H1 (cell line): ENCODE measurements at regions of chr9 and their contacts with region 1.

Region 1: GRCh38 chr9:38017149-38017884 is 51.7 kb downstream of the SHB start:
- DNase-seq: peak; percentile 80 to 97
- H3K4me3 ChIP-seq: peak overlapping the region in 2 of 4 experiments; percentile 17 to 37; a peak in 2 of 8 replicates
- H3K27ac ChIP-seq: peak overlapping the region; percentile 83
- H3K4me1 ChIP-seq: peaks cover 31 to 60% (median 39%) of the 10 kb centered on the region in 4 experiments
- H3K27me3 ChIP-seq: no peaks in the 10 kb centered on the region
- CTCF ChIP-seq: peak; percentile 75 to 82 (median 80)
- EP300 ChIP-seq: peak; percentile 26 to 97
- POLR2A ChIP-seq: no peak; a peak in 1 of 3 replicates
- RAD21 ChIP-seq: peak; percentile 80 to 90

Region 2: DNA sequence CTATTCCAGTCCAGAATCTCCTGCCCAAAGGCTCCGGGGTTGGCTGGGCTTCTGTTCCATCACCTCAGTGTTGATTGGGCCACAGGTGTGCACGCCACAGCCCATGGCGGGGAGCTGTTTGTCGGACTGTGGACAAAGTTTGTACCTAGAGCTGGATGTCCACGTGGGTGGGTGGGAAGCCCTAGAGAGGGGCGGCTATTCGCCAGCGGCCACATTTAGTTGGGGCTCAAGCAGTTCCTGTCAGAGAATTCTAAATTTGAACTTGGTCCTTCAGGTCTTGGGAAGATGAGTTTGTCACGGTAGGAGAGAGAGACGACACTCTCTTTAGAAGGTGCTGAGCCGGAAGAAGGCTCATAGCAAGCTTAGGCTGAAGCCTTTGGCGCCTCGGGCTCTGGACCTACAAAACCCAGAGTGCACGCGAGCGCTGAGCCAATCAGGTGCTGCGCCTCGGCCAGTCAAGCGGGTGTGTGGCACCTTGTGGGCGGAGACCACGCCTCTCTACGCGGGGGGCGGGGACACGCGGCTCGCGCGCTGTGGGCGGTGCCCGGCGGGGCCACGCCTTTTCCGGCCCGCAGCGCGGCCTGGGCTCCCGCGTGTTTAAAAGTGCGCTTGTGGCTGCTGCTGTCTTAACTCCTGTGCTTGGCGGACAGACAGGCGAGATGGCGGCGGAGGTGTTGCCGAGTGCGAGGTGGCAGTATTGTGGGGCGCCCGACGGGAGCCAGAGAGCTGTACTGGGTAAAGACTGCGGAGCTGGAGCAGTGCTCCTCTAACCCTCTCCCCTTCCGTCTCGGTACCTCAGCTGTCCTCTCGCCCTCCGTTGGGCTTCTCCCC is 531.7 kb before region 1 on chr9 and contains the start of gene POLR1E:
- CTCF ChIA-PET with region 1: no interaction called
- POLR2A ChIA-PET with region 1: no interaction called
- DNase-seq: peak; percentile 91 to 98
- H3K4me3 ChIP-seq: peak within 1 kb of the TSS; percentile 78 to 90 (median 79)
- H3K27ac ChIP-seq: no peak within 1 kb of the TSS; the same call in 1 of the 2 replicates
- H3K4me1 ChIP-seq: peaks cover 0 to 14% (median 6%) of the 10 kb centered on the region in 4 experiments; a peak in 5 of 7 replicates
- H3K27me3 ChIP-seq: no peaks in the 10 kb centered on the region
- CTCF ChIP-seq: no peak
- EP300 ChIP-seq: no peak
- POLR2A ChIP-seq: peak; percentile 59 to 89
- RAD21 ChIP-seq: no peak
- total RNA-seq, gene POLR1E: 36.9 and 40.0 TPM in 2 replicates

Region 3: GRCh38 chr9:37753489-37754190 is 263.7 kb before region 1 on chr9 and contains the start of gene TRMT10B:
- CTCF ChIA-PET with region 1: no interaction called
- POLR2A ChIA-PET with region 1: no interaction called
- DNase-seq: peak in 1 of 2 experiments; percentile 82
- H3K4me3 ChIP-seq: peak within 1 kb of the TSS; percentile 72 to 89 (median 86)
- H3K27ac ChIP-seq: no peak within 1 kb of the TSS
- H3K4me1 ChIP-seq: peaks cover 0 to 5% (median 1%) of the 10 kb centered on the region in 4 experiments; a peak in 4 of 7 replicates
- H3K27me3 ChIP-seq: no peaks in the 10 kb centered on the region
- CTCF ChIP-seq: no peak
- EP300 ChIP-seq: no peak
- POLR2A ChIP-seq: no peak
- RAD21 ChIP-seq: no peak
- total RNA-seq, gene TRMT10B: 4.5 and 6.2 TPM in 2 replicates

Region 4: DNA sequence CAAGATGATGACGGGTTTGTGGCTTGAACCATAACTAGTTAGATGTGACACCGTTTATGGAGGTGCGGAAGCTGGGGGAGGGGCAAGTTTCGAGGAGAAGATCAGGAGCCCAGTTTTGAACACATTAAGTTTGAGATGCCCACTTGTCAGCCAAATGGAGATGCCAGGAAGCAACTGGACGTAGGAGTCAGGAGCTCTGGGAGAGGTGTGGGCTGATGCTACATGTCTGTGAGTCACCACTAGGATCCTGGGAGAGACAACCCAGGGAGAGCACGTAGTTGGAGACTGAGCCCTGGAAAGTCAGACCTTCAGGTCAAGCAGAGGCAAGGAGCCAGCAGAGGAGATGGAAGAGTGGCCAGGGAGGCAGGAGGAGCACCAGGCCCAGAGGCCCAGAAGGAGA is 64.6 kb before region 1 on chr9:
- CTCF ChIA-PET with region 1: interaction called, 10 read pairs
- POLR2A ChIA-PET with region 1: no interaction called
- DNase-seq: no peak
- H3K4me3 ChIP-seq: no peak overlapping the region
- H3K27ac ChIP-seq: no peak overlapping the region
- H3K4me1 ChIP-seq: no peaks in the 10 kb centered on the region
- H3K27me3 ChIP-seq: no peaks in the 10 kb centered on the region
- CTCF ChIP-seq: no peak
- EP300 ChIP-seq: no peak
- POLR2A ChIP-seq: no peak
- RAD21 ChIP-seq: no peak

Region 5: DNA sequence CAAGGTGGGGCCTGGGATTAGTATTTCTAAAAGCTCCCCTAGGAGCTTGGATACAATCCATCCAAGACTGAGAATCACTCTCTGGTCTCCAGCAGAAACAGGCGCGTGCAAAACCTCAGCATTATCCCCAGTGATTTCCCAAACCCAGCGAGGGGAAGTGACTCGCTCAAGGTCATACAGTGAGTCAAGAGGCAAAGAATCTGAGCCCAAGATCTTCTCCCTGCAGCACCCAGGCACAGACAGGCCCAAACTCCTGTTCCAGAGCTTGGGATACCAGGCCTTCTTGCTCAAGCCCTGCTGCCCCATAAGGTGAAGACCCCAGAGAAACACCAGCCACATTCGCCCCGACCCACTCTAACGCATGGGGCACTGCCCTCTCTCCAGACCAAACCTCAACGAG is 18.6 kb after region 1 on chr9:
- CTCF ChIA-PET with region 1: interaction called, 16 read pairs
- POLR2A ChIA-PET with region 1: interaction called, 10 read pairs
- DNase-seq: no peak
- H3K4me3 ChIP-seq: no peak overlapping the region
- H3K27ac ChIP-seq: no peak overlapping the region
- H3K4me1 ChIP-seq: peaks cover 5 to 15% (median 12%) of the 10 kb centered on the region in 4 experiments
- H3K27me3 ChIP-seq: no peaks in the 10 kb centered on the region
- CTCF ChIP-seq: no peak
- EP300 ChIP-seq: no peak
- POLR2A ChIP-seq: no peak
- RAD21 ChIP-seq: no peak

Region 6: DNA sequence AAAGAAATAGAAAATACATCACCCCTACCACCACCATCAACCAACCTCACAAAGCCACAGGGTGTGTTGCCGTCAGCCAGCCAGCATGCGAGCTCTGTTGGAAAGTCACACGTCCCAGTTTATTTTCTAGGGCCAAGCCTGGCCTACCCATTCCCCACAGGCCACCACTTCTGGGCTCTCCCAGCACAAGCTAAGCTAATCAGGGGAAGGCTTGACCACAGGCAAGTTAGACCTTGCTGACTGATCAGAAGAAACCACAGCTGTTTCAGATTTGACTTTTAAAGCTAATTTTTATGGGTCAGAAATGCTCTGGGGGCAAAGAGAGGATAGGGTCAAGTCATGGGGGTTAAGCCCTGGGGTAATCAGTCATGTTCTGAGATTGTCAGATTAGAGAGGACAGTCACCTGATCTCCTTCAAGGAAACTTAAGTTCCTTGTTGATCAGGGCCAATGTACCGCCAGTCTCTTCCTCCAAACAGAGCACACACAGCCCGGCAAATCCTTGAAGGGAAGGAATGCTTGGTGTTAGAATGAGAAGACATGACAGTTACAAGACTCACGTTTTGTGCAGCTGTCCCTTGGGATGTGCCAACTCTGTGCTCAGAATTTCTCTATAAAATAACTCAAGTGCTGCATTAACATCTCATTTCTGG is 44.1 kb after region 1 on chr9:
- CTCF ChIA-PET with region 1: interaction called, 22 read pairs
- POLR2A ChIA-PET with region 1: interaction called, 6 read pairs
- DNase-seq: no peak
- H3K4me3 ChIP-seq: no peak overlapping the region
- H3K27ac ChIP-seq: no peak overlapping the region
- H3K4me1 ChIP-seq: peaks cover 15 to 31% (median 23%) of the 10 kb centered on the region in 4 experiments
- H3K27me3 ChIP-seq: peaks cover 0 to 1% (median 0%) of the 10 kb centered on the region in 4 experiments; a peak in 2 of 7 replicates
- CTCF ChIP-seq: no peak
- EP300 ChIP-seq: no peak
- POLR2A ChIP-seq: no peak
- RAD21 ChIP-seq: no peak

Region 7: GRCh38 chr9:38160613-38161215 is 143.4 kb after region 1 on chr9:
- CTCF ChIA-PET with region 1: interaction called, 17 read pairs
- POLR2A ChIA-PET with region 1: no interaction called
- DNase-seq: peak in 1 of 2 experiments; percentile 87
- H3K4me3 ChIP-seq: no peak overlapping the region
- H3K27ac ChIP-seq: no peak overlapping the region
- H3K4me1 ChIP-seq: no peaks in the 10 kb centered on the region
- H3K27me3 ChIP-seq: no peaks in the 10 kb centered on the region
- CTCF ChIP-seq: peak; percentile 76 to 91 (median 82)
- EP300 ChIP-seq: no peak
- POLR2A ChIP-seq: no peak
- RAD21 ChIP-seq: peak; percentile 74 to 83